ENCODE measurements at regions of chr9 and their contacts with region 1.

Region 1: DNA sequence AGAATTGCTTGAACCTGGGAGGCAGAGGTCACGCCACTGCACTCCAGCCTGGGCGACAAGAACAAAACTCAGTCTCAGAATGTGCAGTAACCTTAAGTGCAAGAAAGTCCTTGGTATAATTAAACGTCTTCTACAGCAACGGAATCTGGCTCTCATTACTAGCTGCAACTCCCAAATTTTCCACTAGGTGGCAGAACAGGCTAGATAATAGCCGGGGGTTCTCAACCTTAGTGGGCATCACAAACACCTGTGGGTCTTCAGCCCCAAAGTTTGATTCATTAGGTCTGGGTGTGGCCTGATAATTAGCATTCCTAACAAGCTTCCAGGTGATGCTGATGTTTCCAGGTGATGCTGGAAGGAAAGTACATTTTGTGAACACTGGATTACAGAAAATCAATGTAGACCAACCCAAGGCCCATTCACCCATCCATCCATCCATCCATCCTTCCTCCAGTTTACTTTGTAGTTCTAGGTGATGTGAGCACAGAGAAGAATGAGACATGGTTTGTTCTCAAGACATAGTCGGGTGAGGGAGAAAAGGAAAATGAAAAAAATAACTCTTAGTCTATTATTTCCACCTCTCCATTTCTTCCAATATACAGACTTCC is 37.3 kb downstream of the FBXW2 start:
- DNase-seq: peak; percentile 75
- ATAC-seq: peak; percentile 89
- H3K4me3 Mint-ChIP-seq: no peak overlapping the region
- H3K27ac Mint-ChIP-seq: peak overlapping the region; percentile 52
- H3K4me1 Mint-ChIP-seq: peaks cover 22% of the 10 kb centered on the region
- H3K27me3 Mint-ChIP-seq: no peaks in the 10 kb centered on the region
- CTCF ChIP-seq: peak; percentile 97

Region 2: DNA sequence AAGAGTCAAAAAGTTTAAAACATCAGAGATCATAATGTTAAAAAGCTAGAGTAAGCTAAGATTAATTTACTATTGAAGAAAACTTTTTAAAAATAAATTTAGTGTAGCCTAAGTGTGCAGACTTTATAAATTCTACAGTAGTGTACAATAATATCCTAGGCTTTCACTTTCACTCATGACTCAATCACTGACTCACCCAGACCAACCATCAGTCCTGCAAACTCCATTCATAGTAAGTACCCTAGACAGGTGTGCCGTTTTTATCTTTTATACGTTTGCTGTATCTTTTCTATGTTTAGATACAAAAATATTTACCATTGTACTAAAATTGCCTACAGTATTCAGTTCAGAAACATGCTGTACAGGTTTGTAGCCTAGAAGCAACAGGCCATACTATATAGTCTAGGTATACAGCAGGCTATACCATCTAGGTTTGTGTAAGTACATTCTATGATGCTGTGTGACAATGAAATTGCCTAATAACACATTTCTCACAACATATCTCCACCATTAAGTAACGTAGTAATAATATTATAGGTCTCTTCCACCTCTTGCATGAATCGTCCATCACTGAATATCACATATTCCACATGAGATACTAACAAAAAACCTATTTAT is 100.8 kb before region 1 on chr9:
- CTCF ChIA-PET with region 1: no interaction called
- POLR2A ChIA-PET with region 1: no interaction called
- intact Hi-C with region 1: no loop called
- DNase-seq: peak; percentile 3
- ATAC-seq: peak; percentile 83
- H3K4me3 Mint-ChIP-seq: no peak overlapping the region
- H3K27ac Mint-ChIP-seq: no peak overlapping the region
- H3K4me1 Mint-ChIP-seq: peaks cover 3% of the 10 kb centered on the region
- H3K27me3 Mint-ChIP-seq: no peaks in the 10 kb centered on the region
- CTCF ChIP-seq: no peak

Region 3: DNA sequence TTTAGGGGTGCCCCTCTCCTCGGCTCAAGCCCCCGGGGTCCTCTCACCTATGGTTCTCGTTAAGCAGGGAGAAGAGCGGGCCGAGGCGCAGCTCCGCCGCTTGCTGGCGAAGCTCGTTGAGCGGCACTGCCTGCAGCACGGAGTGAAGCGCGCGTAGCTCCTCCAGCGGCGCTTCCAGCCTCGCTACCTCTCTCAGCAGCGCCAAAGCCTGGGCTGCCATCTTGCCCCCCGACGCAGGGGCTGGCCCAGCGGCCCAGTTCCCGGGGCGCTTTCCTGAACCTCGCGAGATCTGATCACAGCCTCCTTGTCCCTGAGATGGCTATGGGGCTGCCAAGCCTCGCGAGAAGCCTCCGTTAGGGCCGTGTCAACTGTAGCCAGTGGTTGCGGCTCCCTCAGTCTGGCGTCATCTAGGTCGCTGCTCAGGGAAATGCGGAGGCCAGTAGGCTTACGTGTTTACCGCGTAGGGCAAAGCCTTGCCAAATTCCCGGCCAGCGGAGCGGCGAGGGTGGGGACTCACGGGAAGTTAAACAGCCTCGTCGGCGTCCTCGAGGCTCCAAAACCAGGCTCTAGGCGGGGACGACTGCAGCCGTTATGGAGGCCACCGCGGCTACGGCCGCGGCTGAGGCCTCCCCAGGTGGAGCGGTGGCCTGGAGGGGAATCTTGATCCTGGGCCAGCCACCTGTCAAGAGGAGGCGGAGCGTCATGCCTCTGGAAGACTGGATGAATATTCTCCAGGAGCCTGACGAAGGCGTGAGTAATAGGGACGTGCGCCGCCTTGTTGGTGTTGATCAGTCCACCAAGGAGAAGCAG is 87.0 kb after region 1 on chr9 and contains the start of gene PSMD5:
- CTCF ChIA-PET with region 1: interaction called, 3 read pairs
- POLR2A ChIA-PET with region 1: interaction called, 4 read pairs
- intact Hi-C with region 1: loop called (anchors 5 kb)
- DNase-seq: peak; percentile 100
- ATAC-seq: peak; percentile 90
- H3K4me3 Mint-ChIP-seq: peak within 1 kb of the TSS; percentile 98
- H3K27ac Mint-ChIP-seq: peak within 1 kb of the TSS; percentile 95
- H3K4me1 Mint-ChIP-seq: peaks cover 71% of the 10 kb centered on the region
- H3K27me3 Mint-ChIP-seq: no peaks in the 10 kb centered on the region
- CTCF ChIP-seq: no peak
- total RNA-seq, gene PSMD5: 52.3 to 55.3 TPM

Region 4: GRCh38 chr9:120928483-120929228 is 172.7 kb after region 1 on chr9:
- CTCF ChIA-PET with region 1: interaction called, 5 read pairs
- POLR2A ChIA-PET with region 1: no interaction called
- intact Hi-C with region 1: loop called (anchors 5 kb)
- DNase-seq: peak; percentile 83
- ATAC-seq: peak; percentile 21
- H3K4me3 Mint-ChIP-seq: peak overlapping the region; percentile 88
- H3K27ac Mint-ChIP-seq: peak overlapping the region; percentile 100
- H3K4me1 Mint-ChIP-seq: peaks cover 53% of the 10 kb centered on the region
- H3K27me3 Mint-ChIP-seq: no peaks in the 10 kb centered on the region
- CTCF ChIP-seq: no peak

Region 5: DNA sequence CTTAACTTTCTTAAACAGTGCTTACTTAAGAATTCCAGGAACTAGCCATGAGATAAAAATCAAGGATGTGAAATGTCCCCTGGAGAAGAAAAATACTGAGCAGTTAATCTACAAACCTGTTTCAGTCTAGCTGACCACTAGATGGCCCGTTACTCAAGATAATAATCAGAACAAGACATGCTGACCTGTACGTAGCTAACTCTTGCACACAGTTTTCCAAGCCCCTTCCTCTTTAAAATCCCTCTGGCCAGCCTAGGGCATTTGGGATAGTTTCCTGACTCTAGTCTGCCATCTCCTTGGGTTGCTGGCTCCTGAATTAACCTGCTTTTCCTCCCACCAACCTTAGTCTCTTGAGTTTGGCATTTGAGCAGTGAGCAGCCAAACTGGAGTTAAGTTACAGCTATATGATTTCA is 229.9 kb after region 1 on chr9:
- CTCF ChIA-PET with region 1: interaction called, 29 read pairs
- POLR2A ChIA-PET with region 1: no interaction called
- intact Hi-C with region 1: no loop called
- DNase-seq: no peak
- ATAC-seq: no peak
- H3K4me3 Mint-ChIP-seq: no peak overlapping the region
- H3K27ac Mint-ChIP-seq: no peak overlapping the region
- H3K4me1 Mint-ChIP-seq: peaks cover 4% of the 10 kb centered on the region
- H3K27me3 Mint-ChIP-seq: no peaks in the 10 kb centered on the region
- CTCF ChIP-seq: peak; percentile 26

Region 6: GRCh38 chr9:121074635-121075385 is 318.9 kb after region 1 on chr9 and contains the start of gene CNTRL:
- CTCF ChIA-PET with region 1: interaction called, 6 read pairs
- POLR2A ChIA-PET with region 1: no interaction called
- intact Hi-C with region 1: loop called (anchors 5 kb)
- DNase-seq: peak; percentile 98
- ATAC-seq: peak; percentile 91
- H3K4me3 Mint-ChIP-seq: peak within 1 kb of the TSS; percentile 97
- H3K27ac Mint-ChIP-seq: peak within 1 kb of the TSS; percentile 97
- H3K4me1 Mint-ChIP-seq: peaks cover 38% of the 10 kb centered on the region
- H3K27me3 Mint-ChIP-seq: no peaks in the 10 kb centered on the region
- CTCF ChIP-seq: no peak
- total RNA-seq, gene CNTRL: 62.8 to 69.8 TPM